GM10248 (cell line): ENCODE measurements at regions of chr17 and their contacts with region 1.

Region 1: DNA sequence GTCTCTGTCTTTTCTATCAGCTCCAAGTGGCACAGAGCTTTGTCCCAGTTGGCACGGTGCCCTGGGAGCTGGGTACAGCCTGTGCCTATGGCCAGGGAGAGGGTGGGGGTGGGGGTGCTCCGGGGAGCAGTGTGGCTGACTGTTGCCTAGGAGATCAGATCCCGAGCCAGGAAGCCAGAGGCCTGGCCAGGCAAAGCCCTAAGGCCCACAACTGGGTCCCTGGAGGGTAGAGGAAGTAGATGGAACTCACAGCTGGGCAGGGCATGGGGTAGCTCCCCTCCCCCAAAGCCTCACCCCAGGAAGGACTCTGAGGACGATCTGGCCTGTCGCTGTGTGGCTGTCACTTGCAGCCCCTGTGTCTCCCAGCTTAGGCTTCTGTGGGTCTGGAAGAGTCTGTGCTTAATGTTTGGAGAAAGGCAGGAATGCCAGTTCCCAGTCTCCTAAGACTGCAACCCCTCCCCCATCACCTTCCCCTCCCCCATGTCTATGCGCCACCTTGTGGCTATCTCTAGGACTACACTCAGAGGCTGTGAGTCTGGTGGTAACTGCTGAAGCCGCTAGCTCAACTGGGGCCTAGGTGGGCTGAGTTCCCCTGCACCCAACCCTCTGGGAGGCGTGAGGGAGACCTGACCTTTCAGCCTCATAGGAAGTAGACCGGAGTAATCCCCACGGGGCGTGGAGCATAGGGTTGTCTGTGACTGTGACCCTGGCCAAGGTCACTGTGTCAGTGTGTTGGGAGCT is 12.6 kb downstream of the THRA start:
- DNase-seq: peak; percentile 72
- CTCF ChIP-seq: peak; percentile 79

Region 2: GRCh38 chr17:40019140-40019991 is 56.0 kb before region 1 on chr17:
- CTCF ChIA-PET with region 1: interaction called, 43 read pairs
- POLR2A ChIA-PET with region 1: no interaction called
- DNase-seq: no peak
- CTCF ChIP-seq: no peak

Region 3: DNA sequence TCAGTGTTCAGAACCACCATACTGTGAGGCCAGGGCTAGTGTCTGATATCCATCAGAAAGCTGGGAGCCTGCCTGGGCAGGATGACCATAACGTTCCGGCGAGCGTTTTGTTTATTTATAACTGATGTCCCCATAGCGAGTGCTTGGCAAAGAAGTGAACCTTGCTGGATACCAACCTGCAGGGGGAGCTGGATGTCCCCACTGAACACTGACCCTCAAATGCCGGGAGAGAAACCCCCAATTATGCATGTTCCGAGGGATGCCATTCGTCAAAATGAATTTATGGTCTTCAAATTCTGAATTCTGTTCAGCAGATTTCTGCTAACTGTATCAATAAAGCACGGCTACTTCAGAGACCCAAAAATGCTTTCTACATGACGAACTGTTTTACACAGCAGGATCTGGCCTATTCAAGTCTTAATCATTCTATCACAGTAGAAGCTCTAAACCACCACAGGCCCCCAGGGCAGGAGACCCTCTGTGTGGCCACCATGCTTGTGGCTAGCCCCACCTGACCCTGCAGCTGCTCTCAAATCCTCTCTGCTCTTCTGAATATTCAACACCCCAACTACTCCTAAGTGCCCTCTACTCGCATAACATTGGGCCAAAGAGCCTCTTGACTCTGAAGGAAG is 36.4 kb before region 1 on chr17:
- CTCF ChIA-PET with region 1: interaction called, 15 read pairs
- POLR2A ChIA-PET with region 1: no interaction called
- DNase-seq: no peak
- CTCF ChIP-seq: peak; percentile 10

Region 4: GRCh38 chr17:40086150-40087044 is 11.0 kb after region 1 on chr17:
- CTCF ChIA-PET with region 1: interaction called, 55 read pairs
- POLR2A ChIA-PET with region 1: no interaction called
- DNase-seq: peak; percentile 79
- CTCF ChIP-seq: peak; percentile 86

Region 5: GRCh38 chr17:40098846-40099618 is 23.7 kb after region 1 on chr17:
- CTCF ChIA-PET with region 1: interaction called, 67 read pairs
- POLR2A ChIA-PET with region 1: no interaction called
- DNase-seq: peak; percentile 94
- CTCF ChIP-seq: no peak